ENCODE measurements at regions of chr5 and their contacts with region 1.

Region 1: GRCh38 chr5:96896806-96897205 is 20.5 kb downstream of the ERAP2 start:
- DNase-seq: peak; percentile 81
- H3K4me3 ChIP-seq: peak overlapping the region; percentile 39
- H3K27ac ChIP-seq: peak overlapping the region; percentile 73
- H3K4me1 ChIP-seq: peaks cover 23% of the 10 kb centered on the region
- CTCF ChIP-seq: peak; percentile 36; the same call in 1 of the 2 replicates

Region 2: DNA sequence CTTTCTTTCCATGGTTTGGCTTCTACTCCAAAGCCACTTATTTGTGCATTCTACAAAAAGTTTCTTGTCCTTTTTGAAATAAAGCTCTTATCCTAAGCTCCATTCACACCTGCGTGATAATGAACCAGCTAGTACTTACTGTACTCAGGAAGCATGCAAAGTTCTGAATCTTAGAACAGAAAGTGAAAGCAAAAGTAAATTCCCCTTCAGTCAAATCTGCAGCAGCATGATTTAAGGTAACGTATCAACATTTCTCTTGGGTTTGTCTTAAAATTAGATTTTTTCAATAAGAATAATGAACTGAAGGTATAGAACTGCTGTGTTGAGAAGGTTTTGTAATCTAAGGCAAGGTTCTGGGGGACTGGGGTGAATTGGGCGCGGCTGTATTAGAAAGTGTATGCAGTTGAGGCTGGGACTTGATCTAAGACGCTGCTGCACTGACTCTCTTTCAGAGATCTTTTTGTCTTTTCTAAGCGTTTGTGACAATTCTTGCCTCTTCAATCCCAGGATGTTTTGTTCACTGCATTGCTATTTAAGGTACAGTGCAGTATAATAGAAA is 20.4 kb before region 1 on chr5 and contains the start of gene ERAP2:
- CTCF ChIA-PET with region 1: interaction called, 3 read pairs
- POLR2A ChIA-PET with region 1: interaction called, 17 read pairs
- intact Hi-C with region 1: no loop called
- DNase-seq: peak; percentile 78
- H3K4me3 ChIP-seq: peak within 1 kb of the TSS; percentile 80
- H3K27ac ChIP-seq: peak within 1 kb of the TSS; percentile 64
- H3K4me1 ChIP-seq: peaks cover 69% of the 10 kb centered on the region
- CTCF ChIP-seq: no peak
- total RNA-seq, gene ERAP2: 29.3 and 35.6 TPM in 2 replicates

Region 3: GRCh38 chr5:96885518-96886338 is 11.1 kb before region 1 on chr5:
- CTCF ChIA-PET with region 1: interaction called, 3 read pairs
- POLR2A ChIA-PET with region 1: interaction called, 13 read pairs
- intact Hi-C with region 1: no loop called
- DNase-seq: peak; percentile 84
- H3K4me3 ChIP-seq: peak overlapping the region; percentile 42
- H3K27ac ChIP-seq: peak overlapping the region; percentile 67
- H3K4me1 ChIP-seq: peaks cover 39% of the 10 kb centered on the region
- CTCF ChIP-seq: no peak

Measured in OCI-LY7 (cell line).